ENCODE measurements at regions of chr12 and their contacts with region 1.

Region 1: DNA sequence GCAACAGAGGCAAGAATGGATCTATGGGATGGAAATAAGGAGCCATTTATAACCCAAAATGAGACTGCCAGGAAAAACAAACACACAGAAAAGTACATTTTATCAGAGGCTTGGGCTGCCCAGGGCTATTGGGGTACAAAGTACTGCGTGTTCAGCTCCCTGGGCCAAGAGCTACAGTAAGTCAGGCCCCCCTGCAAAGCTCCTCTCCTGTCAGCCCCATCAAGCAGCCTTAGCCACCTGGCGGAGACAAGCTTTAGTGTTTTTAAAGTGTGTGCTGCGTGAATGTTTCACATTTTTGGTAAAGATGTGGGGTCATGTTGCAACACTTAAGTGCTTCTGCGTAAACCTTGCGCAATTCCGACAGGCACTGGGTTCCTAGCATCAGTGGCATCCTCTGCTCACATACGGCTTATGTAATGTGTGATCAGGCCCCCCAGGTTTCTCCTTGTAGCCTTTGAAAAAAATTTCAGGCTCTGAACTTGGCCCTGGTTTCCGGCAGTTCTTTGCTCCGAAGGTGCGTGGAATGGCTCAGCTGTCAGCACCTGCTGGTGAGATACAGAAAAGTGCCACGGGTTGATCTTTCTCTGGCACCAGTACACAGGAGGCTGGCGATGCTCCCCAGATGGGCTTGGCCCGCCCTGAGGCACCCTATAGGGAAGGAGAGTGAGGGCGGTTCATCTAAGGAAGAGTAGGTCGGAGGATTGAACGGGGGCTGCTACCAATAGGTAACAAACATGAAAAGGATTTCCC is 198.7 kb upstream of the EEA1 start:
- DNase-seq: peak; percentile 94
- H3K4me3 ChIP-seq: peak overlapping the region in 2 of 4 donors; percentile 9 to 30
- H3K27ac ChIP-seq: peak overlapping the region; percentile 80 to 87 (median 84)
- H3K4me1 ChIP-seq: peaks cover 32 to 51% (median 40%) of the 10 kb centered on the region in 4 donors
- H3K27me3 ChIP-seq: no peaks in the 10 kb centered on the region
- CTCF ChIP-seq: peak in 2 of 3 experiments; percentile 34 to 54
- EP300 ChIP-seq: peak; percentile 99
- POLR2A ChIP-seq: no peak

Region 2: GRCh38 chr12:93146263-93146939 is 18.6 kb after region 1 on chr12:
- intact Hi-C with region 1: no loop called
- DNase-seq: no peak
- H3K4me3 ChIP-seq: no peak overlapping the region
- H3K27ac ChIP-seq: no peak overlapping the region
- H3K4me1 ChIP-seq: peaks cover 0 to 13% (median 8%) of the 10 kb centered on the region in 4 donors
- H3K27me3 ChIP-seq: no peaks in the 10 kb centered on the region
- CTCF ChIP-seq: no peak
- EP300 ChIP-seq: no peak
- POLR2A ChIP-seq: no peak

Region 3: GRCh38 chr12:93183940-93184671 is 56.3 kb after region 1 on chr12:
- intact Hi-C with region 1: loop called (anchors 5 kb)
- DNase-seq: peak; percentile 93
- H3K4me3 ChIP-seq: no peak overlapping the region
- H3K27ac ChIP-seq: peak overlapping the region; percentile 84 to 89 (median 86)
- H3K4me1 ChIP-seq: peaks cover 29 to 65% (median 55%) of the 10 kb centered on the region in 4 donors
- H3K27me3 ChIP-seq: no peaks in the 10 kb centered on the region
- CTCF ChIP-seq: no peak
- EP300 ChIP-seq: no peak
- POLR2A ChIP-seq: no peak

Region 4: GRCh38 chr12:93380480-93381121 is 252.8 kb after region 1 on chr12:
- intact Hi-C with region 1: loop called (anchors 10 kb)
- DNase-seq: no peak
- H3K4me3 ChIP-seq: peak overlapping the region; percentile 65 to 98 (median 80)
- H3K27ac ChIP-seq: peak overlapping the region; percentile 93 to 99 (median 96)
- H3K4me1 ChIP-seq: peaks cover 15 to 76% (median 73%) of the 10 kb centered on the region in 4 donors
- H3K27me3 ChIP-seq: no peaks in the 10 kb centered on the region
- CTCF ChIP-seq: peak; percentile 30 to 48 (median 40)
- EP300 ChIP-seq: no peak
- POLR2A ChIP-seq: no peak

Measured in esophagus muscularis mucosa (tissue), 4 donors.